ENCODE measurements at regions of chr5 and their contacts with region 1.

Region 1: DNA sequence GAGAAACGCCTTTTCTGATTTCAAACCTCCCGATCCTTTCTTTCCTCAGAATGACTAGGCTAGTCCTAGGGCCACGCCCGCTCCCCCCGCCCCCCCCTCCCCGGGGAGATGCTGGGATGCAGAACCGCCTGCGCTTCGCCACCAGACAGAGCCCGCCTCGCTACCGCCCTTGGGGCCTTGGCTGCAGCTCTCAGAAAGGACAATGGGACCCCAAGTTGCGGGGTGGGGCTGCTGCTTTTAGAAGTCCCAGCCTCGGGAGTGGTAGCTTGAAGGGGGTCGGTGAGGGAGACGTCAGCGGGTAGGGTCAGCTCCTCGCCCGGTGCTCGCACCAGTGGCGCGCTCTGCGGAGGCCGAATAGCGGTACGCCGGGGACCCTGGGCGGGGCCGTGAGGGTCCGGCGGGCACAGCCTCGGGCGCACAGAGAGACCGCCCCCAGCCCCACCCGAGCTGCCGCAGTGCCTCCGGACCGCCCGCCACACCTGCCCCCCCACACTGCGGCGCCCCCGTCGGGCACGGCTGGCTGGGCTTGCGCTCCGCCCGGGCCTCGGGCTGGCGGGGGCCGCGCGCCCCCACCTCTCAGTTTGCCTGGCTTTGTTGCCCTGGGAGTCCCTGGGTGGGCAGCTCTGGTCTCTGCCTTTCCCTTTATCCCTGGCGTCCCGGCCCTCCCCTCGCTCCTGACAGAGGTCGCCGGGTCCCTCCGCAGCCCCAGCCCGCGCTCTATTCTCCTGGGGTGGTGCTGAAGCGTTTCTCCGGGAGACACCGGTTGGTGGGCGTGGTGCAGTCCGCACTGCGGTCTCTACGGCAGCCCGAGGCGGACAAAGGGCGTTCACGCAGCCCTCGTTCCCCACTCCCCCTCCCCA is 1.2 kb downstream of the MAP1B start:
- DNase-seq: peak; percentile 56 to 93
- H3K4me3 ChIP-seq: peak overlapping the region; percentile 72 to 94
- H3K27ac ChIP-seq: peak overlapping the region; percentile 94 to 97
- H3K4me1 ChIP-seq: peaks cover 0 to 14% of the 10 kb centered on the region in 2 donors
- H3K27me3 ChIP-seq: no peaks in the 10 kb centered on the region
- CTCF ChIP-seq: no peak

Region 2: GRCh38 chr5:71384706-71385105 is 723.7 kb before region 1 on chr5:
- intact Hi-C with region 1: no loop called
- DNase-seq: no peak
- H3K4me3 ChIP-seq: no peak overlapping the region
- H3K27ac ChIP-seq: no peak overlapping the region
- H3K4me1 ChIP-seq: no peaks in the 10 kb centered on the region
- H3K27me3 ChIP-seq: no peaks in the 10 kb centered on the region
- CTCF ChIP-seq: no peak

Region 3: DNA sequence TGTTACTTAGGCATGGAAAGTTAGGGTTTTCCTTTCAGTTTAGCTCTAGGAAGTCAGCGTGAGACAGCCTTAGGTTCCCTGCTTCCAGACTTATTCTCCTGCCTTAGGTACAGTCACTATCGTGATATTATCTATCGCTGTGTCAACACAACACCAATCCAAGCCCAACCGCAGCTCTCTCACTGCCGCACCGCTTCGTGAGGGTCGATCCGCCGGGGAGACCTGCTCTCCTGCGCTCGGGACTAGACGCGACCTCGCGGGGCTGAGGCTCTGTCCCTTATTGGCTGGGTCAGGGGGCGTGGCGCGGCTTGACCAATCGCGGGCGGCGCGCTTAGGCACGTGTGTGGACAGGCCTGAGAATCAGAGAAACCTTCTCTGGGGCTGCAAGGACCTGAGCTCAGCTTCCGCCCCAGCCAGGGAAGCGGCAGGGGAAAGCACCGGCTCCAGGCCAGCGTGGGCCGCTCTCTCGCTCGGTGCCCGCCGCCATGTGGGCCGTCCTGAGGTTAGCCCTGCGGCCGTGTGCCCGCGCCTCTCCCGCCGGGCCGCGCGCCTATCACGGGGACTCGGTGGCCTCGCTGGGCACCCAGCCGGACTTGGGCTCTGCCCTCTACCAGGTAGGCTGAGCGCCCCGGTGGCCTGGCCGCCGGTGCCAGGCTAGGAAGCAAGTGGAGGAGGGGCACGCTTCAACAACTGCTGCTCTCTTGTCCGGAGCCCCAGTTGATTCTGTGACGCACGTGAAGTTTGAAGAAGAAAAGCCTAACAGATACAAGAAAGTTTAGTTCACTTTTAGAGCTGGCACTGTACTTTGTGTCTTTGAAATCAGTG is 521.3 kb before region 1 on chr5 and contains the start of gene MCCC2:
- intact Hi-C with region 1: loop called (anchors 10 kb)
- DNase-seq: peak; percentile 91 to 99
- H3K4me3 ChIP-seq: peak within 1 kb of the TSS; percentile 81 to 84
- H3K27ac ChIP-seq: peak within 1 kb of the TSS; percentile 89 to 92
- H3K4me1 ChIP-seq: peaks cover 0 to 13% of the 10 kb centered on the region in 2 donors
- H3K27me3 ChIP-seq: no peaks in the 10 kb centered on the region
- CTCF ChIP-seq: no peak
- total RNA-seq, gene MCCC2: 13.8 TPM

Region 4: DNA sequence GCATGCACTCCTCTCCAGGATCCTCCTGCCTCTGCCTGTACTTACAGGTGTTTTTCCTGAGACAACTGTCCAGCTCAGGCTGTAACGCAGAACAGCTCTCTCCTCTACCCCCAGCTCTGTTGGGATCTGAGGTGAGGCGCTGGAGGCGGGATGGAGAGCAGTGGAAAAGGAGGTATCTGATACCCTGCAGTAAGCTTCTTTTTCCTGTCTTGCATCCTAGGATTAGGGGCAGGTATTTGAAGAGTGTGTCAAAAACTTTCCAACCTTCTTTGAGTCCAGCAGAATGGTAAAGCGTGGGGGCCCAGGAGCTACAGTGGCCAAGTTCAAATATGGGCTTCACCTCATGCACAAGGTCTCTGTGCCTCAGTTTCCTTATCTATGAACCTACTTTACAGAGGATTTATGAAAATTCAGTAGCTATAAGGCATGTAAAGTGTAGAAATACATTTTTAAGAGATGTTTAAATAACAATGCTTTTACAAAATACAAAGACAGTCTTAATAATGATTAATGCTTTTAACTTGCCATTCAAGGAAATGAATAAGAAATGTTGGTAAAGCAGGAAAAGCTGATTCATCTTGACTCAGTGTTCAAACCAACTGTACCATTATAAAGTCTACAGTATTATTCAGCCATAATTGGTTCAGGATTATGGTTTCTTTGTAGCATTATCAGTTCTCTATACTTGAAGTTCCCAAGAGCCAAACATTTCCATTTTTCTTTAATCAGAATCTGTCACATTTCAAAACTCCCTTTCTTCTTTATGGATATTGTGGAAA is 25.0 kb after region 1 on chr5:
- intact Hi-C with region 1: loop called (anchors 2 kb)
- DNase-seq: no peak
- H3K4me3 ChIP-seq: no peak overlapping the region
- H3K27ac ChIP-seq: peak overlapping the region; percentile 93 to 95
- H3K4me1 ChIP-seq: peaks cover 14 to 81% of the 10 kb centered on the region in 2 donors
- H3K27me3 ChIP-seq: no peaks in the 10 kb centered on the region
- CTCF ChIP-seq: no peak